Activated CD8-positive, alpha-beta memory T cell treated with anti-CD3 and anti-CD28 coated beads, Interleukin-2, amount 10 ng/mL, durations not matched to agents 7 days and 5 days (primary cell): ENCODE measurements at regions of chr22 and their contacts with region 1.

Region 1: GRCh38 chr22:28800308-28801077 is at the start of gene XBP1:
- DNase-seq: peak; percentile 90
- ATAC-seq: peak; percentile 95
- H3K4me3 Mint-ChIP-seq: peak within 1 kb of the TSS; percentile 91
- H3K27ac Mint-ChIP-seq: peak within 1 kb of the TSS; percentile 92
- H3K4me1 Mint-ChIP-seq: peaks cover 45% of the 10 kb centered on the region
- H3K27me3 Mint-ChIP-seq: no peaks in the 10 kb centered on the region
- total RNA-seq, gene XBP1: 139 to 141 TPM

Region 2: DNA sequence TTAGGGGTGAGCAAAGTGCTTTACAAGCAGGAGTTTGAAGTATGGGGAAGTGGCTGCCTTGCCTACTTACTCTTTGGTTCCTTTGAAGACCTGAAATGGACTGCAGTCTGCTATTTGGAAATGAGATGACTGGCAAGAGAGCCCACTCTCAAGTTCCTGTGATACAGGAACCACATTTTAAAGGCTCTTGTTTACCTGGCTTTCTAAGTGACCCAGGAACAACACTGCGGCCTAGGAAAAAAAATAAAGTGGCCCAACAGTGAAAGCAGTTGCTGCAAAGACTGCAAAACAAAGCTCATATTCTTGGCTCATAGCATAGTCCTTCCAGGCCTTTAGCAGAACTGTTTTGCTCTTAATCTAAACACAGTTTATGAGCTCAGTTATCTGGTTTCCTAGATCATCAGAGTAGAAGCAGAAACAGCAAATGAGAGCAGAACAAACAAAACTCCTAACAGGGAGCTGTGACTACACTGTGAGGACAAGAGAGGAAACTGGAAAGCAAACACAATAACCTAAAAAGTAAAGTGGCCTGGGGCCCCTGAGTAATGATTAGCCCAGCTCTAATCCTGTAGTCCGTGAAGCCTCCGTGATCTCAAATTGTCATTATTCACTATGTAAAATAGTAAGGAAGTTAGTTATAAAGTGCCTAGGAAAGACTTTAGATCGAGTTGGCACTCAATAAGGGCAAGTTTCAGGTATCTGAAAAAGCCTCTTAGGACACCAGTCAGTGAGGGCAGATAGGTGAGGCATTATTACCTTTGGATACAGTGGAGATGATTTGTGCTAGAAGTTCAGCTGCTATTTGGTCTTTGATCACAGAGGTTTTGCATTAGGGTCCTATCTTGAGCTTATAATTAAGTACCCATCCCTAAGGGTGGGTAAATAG is 16.5 kb before region 1 on chr22:
- CTCF ChIA-PET with region 1: interaction called, 19 read pairs
- DNase-seq: no peak
- ATAC-seq: no peak
- H3K4me3 Mint-ChIP-seq: no peak overlapping the region
- H3K27ac Mint-ChIP-seq: no peak overlapping the region
- H3K4me1 Mint-ChIP-seq: peaks cover 11% of the 10 kb centered on the region
- H3K27me3 Mint-ChIP-seq: no peaks in the 10 kb centered on the region

Region 3: GRCh38 chr22:28810821-28811491 is 10.5 kb after region 1 on chr22:
- CTCF ChIA-PET with region 1: interaction called, 45 read pairs
- DNase-seq: peak; percentile 81
- ATAC-seq: peak; percentile 46
- H3K4me3 Mint-ChIP-seq: peak overlapping the region; percentile 70
- H3K27ac Mint-ChIP-seq: peak overlapping the region; percentile 92
- H3K4me1 Mint-ChIP-seq: peaks cover 75% of the 10 kb centered on the region
- H3K27me3 Mint-ChIP-seq: no peaks in the 10 kb centered on the region

Region 4: DNA sequence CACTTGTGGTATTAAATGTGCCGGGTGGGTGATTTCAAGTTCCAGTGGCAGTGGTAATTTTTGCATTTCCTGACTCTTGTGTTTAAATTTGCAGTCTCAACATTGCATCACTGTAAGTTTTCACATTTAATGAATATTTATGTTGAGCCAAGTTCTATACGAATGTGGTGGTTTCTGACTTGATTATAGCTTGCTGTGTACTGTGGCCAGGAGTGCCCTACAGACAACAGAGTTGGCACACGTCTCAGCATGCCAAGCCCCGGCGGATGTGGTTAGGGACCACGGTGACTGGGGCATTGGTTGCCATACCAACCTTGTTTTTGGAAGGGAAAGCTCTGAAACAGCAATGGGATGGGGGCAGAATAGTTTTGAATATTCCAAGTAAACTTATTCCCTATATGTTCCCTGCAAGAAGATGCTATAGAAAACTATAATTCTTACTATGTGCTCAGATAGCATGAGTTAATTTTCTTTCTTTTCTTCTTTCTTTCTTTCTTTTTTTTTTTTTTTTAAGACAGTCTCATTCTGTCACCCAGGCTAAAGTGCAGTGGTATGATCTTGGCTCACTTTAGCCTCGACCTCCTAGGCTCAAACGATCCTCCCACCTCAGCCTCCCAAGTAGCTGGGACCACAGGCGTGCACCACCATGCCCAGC is 98.8 kb after region 1 on chr22:
- CTCF ChIA-PET with region 1: no interaction called
- DNase-seq: peak; percentile 49
- ATAC-seq: no peak
- H3K4me3 Mint-ChIP-seq: no peak overlapping the region
- H3K27ac Mint-ChIP-seq: peak overlapping the region; percentile 31
- H3K4me1 Mint-ChIP-seq: peaks cover 9% of the 10 kb centered on the region
- H3K27me3 Mint-ChIP-seq: peaks cover 57% of the 10 kb centered on the region